Mammary epithelial cell (primary cell): ENCODE measurements at regions of chr9 and their contacts with region 1.

Region 1: GRCh38 chr9:3331817-3332216 is 194.0 kb downstream of the RFX3 start:
- DNase-seq: no peak
- H3K4me3 ChIP-seq: no peak overlapping the region
- H3K27ac ChIP-seq: no peak overlapping the region
- H3K4me1 ChIP-seq: no peaks in the 10 kb centered on the region
- H3K27me3 ChIP-seq: no peaks in the 10 kb centered on the region
- CTCF ChIP-seq: peak; percentile 17 to 48

Region 2: DNA sequence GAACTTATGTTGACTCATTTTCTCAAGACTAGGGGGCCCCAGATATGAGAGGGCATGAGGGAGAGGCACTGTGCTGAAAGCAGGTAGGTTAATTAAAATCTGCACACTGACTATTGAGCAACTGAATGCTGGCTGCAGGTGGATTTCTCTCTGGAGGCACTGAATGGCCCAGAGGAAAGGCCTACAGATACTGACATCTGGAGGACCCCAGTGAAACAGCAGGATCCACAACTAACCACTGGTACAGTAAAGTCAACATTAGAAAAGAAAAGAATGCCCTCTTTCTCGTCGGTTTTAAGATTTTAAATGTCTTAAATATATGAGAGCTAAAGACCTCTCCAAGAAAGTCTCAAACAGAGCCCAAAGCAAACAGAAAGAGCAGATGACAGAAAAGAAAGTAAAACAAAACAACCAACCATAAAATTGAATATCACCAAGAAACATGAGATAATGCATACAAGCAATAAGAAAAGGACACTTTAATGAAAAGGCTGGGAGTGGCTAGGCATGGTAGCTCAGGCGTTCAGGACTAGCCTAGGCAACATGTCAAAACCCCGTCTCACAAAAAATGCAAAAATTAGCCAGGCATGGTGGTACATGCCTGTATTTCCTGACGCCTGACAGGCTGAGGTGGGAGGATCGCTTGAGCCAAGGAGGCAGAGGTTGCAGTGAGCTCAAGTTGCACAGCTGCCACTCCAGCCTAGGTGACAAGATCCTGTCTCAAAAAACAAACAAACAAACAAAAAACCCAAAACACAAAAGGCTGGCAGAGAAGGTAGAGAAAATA is 531.2 kb before region 1 on chr9:
- CTCF ChIA-PET with region 1: no interaction called
- dilution Hi-C with region 1: no loop called
- in situ Hi-C with region 1: no loop called
- intact Hi-C with region 1: no loop called
- DNase-seq: peak; percentile 59
- H3K4me3 ChIP-seq: no peak overlapping the region
- H3K27ac ChIP-seq: no peak overlapping the region
- H3K4me1 ChIP-seq: peaks cover 14% of the 10 kb centered on the region
- H3K27me3 ChIP-seq: no peaks in the 10 kb centered on the region
- CTCF ChIP-seq: peak; percentile 47 to 63

Region 3: GRCh38 chr9:3441197-3441816 is 109.5 kb after region 1 on chr9:
- CTCF ChIA-PET with region 1: no interaction called
- dilution Hi-C with region 1: no loop called
- in situ Hi-C with region 1: no loop called
- intact Hi-C with region 1: loop called (anchors 5 kb)
- DNase-seq: peak; percentile 45
- H3K4me3 ChIP-seq: no peak overlapping the region
- H3K27ac ChIP-seq: no peak overlapping the region
- H3K4me1 ChIP-seq: no peaks in the 10 kb centered on the region
- H3K27me3 ChIP-seq: no peaks in the 10 kb centered on the region
- CTCF ChIP-seq: peak; percentile 73 to 74